HCT116 (cell line): ENCODE measurements at regions of chr1 and their contacts with region 1.

Region 1: DNA sequence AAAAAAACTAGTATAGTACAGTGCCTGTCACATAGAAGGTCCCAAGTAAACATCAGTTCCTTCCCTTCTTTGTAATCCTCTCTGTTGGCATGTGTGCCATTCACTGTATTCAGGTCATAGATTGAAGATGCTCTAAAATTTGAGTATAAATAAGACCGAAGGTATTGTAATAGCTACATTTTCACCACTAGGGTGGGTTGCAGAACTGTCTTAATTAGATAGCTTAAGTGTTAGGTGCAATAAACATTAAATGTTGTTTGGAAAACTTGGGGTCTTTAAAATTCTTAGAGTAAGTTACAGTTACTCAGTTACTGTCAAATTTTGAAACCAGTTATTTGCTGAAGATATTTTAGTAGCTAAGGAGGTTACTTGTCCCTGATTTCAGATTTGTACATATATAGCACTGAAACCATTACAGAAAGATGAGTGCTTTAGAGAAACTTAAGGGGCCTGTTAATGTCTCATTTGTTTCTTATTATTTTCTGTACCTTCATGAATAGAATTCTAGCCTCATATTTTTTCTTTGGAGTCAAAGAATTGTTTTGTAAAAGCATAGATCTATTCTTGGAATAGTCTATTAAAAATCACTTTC is 24.3 kb downstream of the PER3 start:
- DNase-seq: peak; percentile 37
- ATAC-seq: peak; percentile 77
- H3K4me3 ChIP-seq: no peak overlapping the region
- H3K27ac ChIP-seq: no peak overlapping the region
- H3K4me1 ChIP-seq: peaks cover 3 to 11% of the 10 kb centered on the region in 2 experiments; a peak in 3 of 4 replicates
- H3K27me3 ChIP-seq: no peaks in the 10 kb centered on the region
- CTCF ChIP-seq: peak; percentile 52 to 82 (median 65); a peak in 5 of 6 replicates
- POLR2A ChIP-seq: no peak
- RAD21 ChIP-seq: peak; percentile 78

Region 2: DNA sequence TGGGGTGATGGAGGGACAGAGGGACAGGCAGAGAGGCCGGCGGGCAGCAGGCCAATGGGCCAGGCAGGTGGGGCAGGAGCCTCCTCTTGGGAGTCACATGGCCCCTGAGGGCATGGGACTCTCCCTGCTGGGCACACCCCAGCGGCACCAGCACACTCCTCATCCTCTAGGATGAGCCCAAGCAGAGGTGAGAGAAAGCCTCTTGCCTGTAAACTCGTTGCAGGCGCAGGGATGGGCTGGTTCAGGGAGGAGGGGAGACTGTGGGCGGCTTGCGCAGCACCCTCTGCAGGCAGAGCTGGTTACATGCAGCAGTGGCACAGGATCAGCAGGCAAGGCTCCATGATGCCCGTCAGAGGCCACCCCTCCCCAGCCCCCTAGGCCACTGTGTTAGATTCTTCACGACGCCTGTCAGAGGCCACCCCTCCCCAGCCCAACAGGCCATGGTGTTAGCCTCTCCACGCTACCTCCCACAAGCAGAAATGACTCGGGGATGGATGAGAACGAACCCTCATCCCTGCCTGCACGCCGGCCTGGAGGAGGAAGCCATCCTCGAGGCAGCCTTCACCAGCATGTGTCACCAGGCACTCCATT is 246.9 kb before region 1 on chr1:
- CTCF ChIA-PET with region 1: no interaction called
- POLR2A ChIA-PET with region 1: no interaction called
- RAD21 ChIA-PET with region 1: no interaction called
- intact Hi-C with region 1: no loop called
- DNase-seq: no peak
- ATAC-seq: peak; percentile 99
- H3K4me3 ChIP-seq: no peak overlapping the region
- H3K27ac ChIP-seq: no peak overlapping the region
- H3K4me1 ChIP-seq: peaks cover 0 to 8% of the 10 kb centered on the region in 2 experiments; a peak in 2 of 4 replicates
- H3K27me3 ChIP-seq: no peaks in the 10 kb centered on the region
- CTCF ChIP-seq: peak; percentile 42 to 84 (median 74); a peak in 5 of 6 replicates
- POLR2A ChIP-seq: no peak
- RAD21 ChIP-seq: peak; percentile 58

Region 3: GRCh38 chr1:7902478-7903085 is 94.2 kb after region 1 on chr1:
- CTCF ChIA-PET with region 1: interaction called, 12 read pairs
- POLR2A ChIA-PET with region 1: no interaction called
- RAD21 ChIA-PET with region 1: interaction called in 1 of 2 experiments, 5 read pairs
- intact Hi-C with region 1: loop called (anchors 1 kb)
- DNase-seq: peak; percentile 67
- ATAC-seq: peak; percentile 96
- H3K4me3 ChIP-seq: peak overlapping the region in 1 of 2 experiments; percentile 17; a peak in 2 of 4 replicates
- H3K27ac ChIP-seq: no peak overlapping the region
- H3K4me1 ChIP-seq: peaks cover 0 to 5% of the 10 kb centered on the region in 2 experiments; a peak in 1 of 4 replicates
- H3K27me3 ChIP-seq: no peaks in the 10 kb centered on the region
- CTCF ChIP-seq: peak; percentile 60 to 78 (median 74)
- POLR2A ChIP-seq: no peak
- RAD21 ChIP-seq: peak; percentile 87

Region 4: DNA sequence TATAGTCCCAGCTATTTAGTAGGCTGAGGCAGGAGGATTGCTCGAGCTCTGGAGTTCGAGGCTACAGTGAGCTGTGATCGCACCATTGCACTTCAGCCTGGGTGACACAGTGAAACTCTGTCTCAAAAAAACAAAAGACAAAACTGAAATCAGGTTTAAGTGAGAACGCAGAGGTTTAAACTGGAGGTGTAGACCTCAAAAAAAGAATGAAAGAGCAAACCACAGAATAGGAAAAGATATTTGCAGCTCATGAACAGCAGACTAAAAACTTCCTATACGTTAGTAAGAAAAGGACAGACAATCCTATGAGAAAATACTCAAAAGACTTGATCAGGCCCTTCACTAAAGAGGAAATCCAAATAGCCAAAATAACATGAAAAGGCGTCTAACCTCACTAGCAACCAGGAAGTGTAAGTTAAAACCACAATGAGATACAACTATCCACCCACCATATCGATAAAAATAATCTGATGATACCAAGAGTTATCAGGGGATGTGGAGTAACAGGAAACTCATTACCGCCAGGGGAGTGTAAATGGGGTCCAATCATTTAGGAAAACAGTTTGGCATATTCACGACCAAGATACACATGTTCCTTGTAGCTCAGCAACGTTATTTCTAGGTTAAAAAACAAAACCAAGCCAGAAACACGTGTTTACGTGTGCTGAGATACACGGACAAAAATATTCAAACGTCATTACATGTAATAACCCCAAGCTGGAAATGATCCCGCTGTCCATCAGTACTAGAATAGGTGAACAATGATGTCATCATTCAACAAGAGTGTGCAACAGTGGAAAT is 122.5 kb after region 1 on chr1:
- CTCF ChIA-PET with region 1: no interaction called
- POLR2A ChIA-PET with region 1: no interaction called
- RAD21 ChIA-PET with region 1: no interaction called
- intact Hi-C with region 1: no loop called
- DNase-seq: no peak
- ATAC-seq: no peak
- H3K4me3 ChIP-seq: no peak overlapping the region
- H3K27ac ChIP-seq: no peak overlapping the region
- H3K4me1 ChIP-seq: no peaks in the 10 kb centered on the region
- H3K27me3 ChIP-seq: peaks cover 5% of the 10 kb centered on the region; the same call in 1 of the 2 replicates
- CTCF ChIP-seq: no peak
- POLR2A ChIP-seq: no peak
- RAD21 ChIP-seq: no peak

Region 5: DNA sequence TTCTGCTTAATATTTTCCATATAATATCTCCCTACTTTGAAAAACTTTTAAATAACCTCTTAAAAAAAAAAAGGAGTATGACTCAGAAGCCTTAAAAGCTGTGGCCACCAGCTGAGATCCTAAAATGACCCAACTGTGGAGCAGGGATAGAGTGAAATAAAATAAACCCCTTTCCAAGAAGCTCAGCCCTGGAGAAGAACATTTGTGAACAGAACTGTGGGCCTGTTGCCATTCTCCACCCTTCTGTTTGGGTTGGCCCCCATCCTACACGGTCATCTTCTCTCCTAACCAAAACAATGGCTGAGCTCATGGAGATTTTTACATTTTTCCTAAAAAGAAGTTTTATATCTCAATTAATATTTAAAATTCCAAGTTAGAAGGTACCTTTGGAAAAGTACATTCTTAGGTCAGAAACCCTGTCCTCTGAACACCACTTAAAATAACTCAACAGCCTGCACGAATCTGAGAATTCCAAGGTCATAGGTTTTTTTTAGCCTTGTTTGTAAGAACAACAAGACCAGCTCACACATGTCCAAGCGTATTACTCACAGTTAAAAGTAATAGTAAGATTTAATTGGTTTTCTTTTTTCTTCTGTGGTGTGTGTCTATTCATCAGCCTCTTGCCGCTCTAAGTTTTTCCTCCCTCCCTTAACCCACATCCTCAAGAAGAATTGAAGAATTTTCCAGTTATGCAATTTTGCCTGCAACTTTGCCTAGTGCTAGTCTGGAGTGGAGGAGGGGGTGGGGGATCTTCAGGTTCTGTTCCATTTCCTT is 325.5 kb after region 1 on chr1:
- CTCF ChIA-PET with region 1: no interaction called
- POLR2A ChIA-PET with region 1: no interaction called
- RAD21 ChIA-PET with region 1: no interaction called
- intact Hi-C with region 1: no loop called
- DNase-seq: peak; percentile 60
- ATAC-seq: peak; percentile 57
- H3K4me3 ChIP-seq: peak overlapping the region in 1 of 2 experiments; percentile 9; a peak in 1 of 4 replicates
- H3K27ac ChIP-seq: peak overlapping the region; percentile 97
- H3K4me1 ChIP-seq: peaks cover 83 to 92% of the 10 kb centered on the region in 2 experiments
- H3K27me3 ChIP-seq: no peaks in the 10 kb centered on the region
- CTCF ChIP-seq: no peak
- POLR2A ChIP-seq: no peak
- RAD21 ChIP-seq: peak; percentile 30